Psoas muscle (tissue), 8 donors: ENCODE measurements at regions of chr14 and their contacts with region 1.

Region 1: GRCh38 chr14:91323671-91324605 is 79.4 kb upstream of the GPR68 start:
- DNase-seq: peak; percentile 83 to 86
- ATAC-seq: peak; percentile 67 to 85 (median 77)
- H3K4me3 ChIP-seq: peak overlapping the region; percentile 54
- H3K27ac ChIP-seq: peak overlapping the region; percentile 47
- H3K4me1 ChIP-seq: no peaks in the 10 kb centered on the region
- H3K27me3 ChIP-seq: no peaks in the 10 kb centered on the region
- CTCF ChIP-seq: peak; percentile 94

Region 2: DNA sequence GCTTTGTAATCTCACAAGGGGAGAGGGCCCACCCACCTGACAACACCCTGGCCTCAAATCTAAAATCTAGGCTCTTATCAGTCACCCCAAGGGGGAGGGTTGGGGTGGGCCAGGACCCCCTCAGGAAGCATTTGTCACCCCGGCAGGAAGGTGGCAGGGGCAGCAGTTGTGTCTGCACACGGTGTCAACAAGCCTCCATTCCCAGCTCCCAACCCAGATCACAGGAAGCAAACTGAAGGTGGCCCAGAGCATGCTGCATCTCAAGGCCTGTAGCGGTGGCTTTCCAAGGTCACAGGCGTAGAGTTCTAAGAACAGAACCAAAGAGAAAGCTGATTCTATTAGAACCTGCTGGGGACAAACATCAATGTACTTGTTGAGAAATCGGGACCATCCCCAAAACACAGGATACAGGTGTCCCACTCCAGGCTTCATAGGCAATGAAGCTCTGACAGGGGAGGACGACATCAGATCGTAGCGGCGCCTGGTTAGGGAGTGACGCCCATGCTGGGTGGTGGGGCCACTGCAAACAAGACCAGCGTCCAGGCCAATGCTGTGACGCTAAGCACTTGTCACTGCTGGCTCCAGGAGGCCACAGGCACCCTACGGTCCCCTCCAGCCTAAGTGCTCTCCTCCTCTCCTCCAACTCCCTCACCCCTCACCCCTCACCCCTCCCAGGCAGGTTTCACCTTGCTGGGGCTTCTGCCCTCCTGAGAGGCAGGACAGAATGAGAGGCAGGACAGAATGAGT is 40.8 kb after region 1 on chr14:
- intact Hi-C with region 1: loop called in 1 of 2 experiments (anchors 1 kb)
- DNase-seq: no peak
- ATAC-seq: no peak
- H3K4me3 ChIP-seq: no peak overlapping the region
- H3K27ac ChIP-seq: no peak overlapping the region
- H3K4me1 ChIP-seq: no peaks in the 10 kb centered on the region
- H3K27me3 ChIP-seq: no peaks in the 10 kb centered on the region
- CTCF ChIP-seq: no peak

Region 3: GRCh38 chr14:91418387-91419043 is 94.6 kb after region 1 on chr14:
- intact Hi-C with region 1: loop called (anchors 2 to 5 kb)
- DNase-seq: peak; percentile 66 to 76
- ATAC-seq: peak; percentile 79 to 89 (median 85)
- H3K4me3 ChIP-seq: peak overlapping the region; percentile 66
- H3K27ac ChIP-seq: no peak overlapping the region
- H3K4me1 ChIP-seq: peaks cover 4% of the 10 kb centered on the region
- H3K27me3 ChIP-seq: peaks cover 0 to 19% (median 10%) of the 10 kb centered on the region in 3 donors
- CTCF ChIP-seq: peak; percentile 95